A673 (cell line): ENCODE measurements at regions of chr2 and their contacts with region 1.

Region 1: DNA sequence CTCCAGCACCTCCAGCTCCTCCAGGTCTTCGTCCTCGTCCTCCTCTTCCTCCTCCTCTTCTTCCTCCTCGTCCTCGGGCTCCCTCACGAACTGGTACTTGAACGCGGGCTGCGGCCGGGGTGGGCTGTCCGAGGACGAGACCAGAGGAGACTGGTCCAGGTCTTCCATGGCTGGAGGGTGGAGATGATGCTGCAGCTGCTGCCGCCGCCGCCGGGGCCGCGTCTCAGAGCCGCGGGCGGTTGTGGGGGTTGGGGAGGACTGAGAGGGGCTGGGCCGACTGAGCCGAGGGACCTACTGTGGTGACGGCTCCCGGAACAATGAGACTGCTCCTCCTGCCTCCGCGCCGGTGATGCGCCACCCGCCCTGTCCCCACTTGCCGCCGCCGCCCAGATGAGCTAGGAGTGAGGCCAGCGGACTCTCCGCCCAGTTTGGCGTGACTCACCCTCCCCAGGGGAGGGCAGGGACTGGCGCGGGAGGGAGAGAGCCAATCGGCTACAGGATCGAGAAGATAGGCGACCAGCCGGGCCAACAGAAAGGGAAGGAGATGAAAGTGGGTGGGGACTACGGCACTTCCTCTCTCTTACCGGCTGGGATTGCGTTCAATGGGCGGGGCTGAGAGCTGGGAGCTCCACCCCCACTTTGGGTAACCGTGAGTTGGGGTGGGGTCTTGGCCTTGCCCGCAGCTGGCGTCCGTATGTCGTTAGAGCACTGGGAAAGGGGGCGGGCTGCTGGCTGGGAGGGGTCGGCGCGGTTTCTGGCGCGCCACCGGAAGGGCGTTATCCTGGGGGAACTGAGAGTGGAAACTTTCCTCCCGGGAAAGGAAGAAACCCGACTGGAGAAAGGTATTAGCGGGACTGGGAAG is at the start of gene RTN4:
- DNase-seq: peak; percentile 100
- H3K4me3 ChIP-seq: peak within 1 kb of the TSS; percentile 95
- H3K27ac ChIP-seq: peak within 1 kb of the TSS; percentile 93
- H3K4me1 ChIP-seq: peaks cover 35% of the 10 kb centered on the region
- H3K27me3 ChIP-seq: no peaks in the 10 kb centered on the region
- CTCF ChIP-seq: no peak
- total RNA-seq, gene RTN4: 244 and 275 TPM in 2 replicates

Region 2: DNA sequence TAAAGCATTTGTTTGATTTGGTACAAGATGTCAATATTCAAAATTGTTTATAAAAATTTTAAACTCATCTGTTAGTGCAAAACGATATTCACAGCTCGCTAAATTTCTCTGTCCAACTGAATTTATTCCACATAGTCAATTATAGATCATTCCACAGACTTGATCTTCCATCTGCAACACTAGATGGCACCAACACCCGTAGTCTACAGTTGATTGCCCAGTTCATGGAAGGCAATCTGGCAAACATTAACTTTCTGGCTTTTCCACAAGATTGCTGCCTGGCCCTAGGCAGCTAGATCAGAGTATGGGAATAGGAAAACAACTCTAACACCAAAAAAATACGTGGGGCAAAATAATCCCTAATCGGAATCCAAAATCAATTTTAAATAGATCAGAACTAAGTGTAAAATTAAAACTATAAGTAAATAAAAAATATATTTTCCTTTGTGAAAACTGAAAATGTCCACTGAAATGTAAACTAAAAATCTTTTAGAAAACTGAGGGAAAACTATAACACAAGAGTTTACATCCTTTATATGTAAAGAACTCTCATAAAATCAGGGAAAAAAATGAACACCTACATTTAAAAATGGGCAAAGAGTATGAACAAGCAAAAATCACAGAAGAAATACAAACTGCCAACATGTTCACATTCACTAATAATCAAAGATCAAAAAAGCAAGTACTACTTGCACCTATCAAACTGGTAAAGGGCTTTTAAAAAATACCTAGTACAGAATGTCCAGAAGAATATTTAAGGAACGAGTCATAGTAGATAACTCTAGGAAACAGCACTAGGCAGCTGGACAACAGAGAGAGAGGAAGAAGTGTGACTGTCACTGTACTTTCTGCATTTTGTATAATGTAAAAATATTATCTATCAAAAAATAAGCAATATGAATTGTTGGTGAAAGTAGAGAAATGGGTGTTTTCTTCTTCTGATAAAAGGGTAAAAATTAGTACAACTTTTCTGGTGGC is 35.1 kb before region 1 on chr2:
- CTCF ChIA-PET with region 1: interaction called, 4 read pairs
- POLR2A ChIA-PET with region 1: interaction called, 3 read pairs
- intact Hi-C with region 1: loop called (anchors 2 kb)
- DNase-seq: peak; percentile 83
- H3K4me3 ChIP-seq: no peak overlapping the region
- H3K27ac ChIP-seq: no peak overlapping the region
- H3K4me1 ChIP-seq: peaks cover 47% of the 10 kb centered on the region
- H3K27me3 ChIP-seq: no peaks in the 10 kb centered on the region
- CTCF ChIP-seq: peak; percentile 82

Region 3: DNA sequence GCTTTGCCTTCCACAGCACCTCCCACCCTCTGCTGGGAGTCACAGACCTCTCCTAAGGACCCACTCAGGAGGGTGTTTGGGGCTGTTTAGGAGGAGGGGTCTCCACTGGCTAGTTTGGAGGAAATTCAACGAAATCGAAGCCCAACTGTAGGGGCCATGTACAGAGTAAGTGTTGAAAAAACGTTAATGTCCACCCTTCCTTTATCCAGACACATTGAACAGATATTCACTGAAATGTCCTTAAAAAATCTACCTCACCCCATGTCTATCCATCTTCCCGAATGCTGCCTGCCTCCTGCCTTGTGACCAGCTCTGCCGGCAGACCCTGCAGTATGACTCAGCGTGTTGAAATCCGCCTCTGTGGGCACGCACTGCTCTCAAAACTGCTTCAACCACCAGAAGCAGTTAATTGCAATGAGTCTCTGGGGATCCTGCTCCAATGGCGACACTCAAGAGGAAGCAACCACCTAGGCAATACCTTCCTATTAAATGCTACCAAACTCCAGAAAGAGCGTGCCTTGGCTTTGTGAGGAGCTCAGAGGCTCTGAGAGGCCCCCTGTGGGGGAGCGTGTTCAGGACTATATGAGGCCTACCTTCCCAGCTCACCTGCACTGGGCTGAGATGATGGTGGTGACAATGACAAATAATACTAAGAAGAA is 61.3 kb after region 1 on chr2:
- CTCF ChIA-PET with region 1: no interaction called
- POLR2A ChIA-PET with region 1: interaction called, 3 read pairs
- intact Hi-C with region 1: loop called (anchors 5 kb)
- DNase-seq: peak; percentile 95
- H3K4me3 ChIP-seq: no peak overlapping the region
- H3K27ac ChIP-seq: peak overlapping the region; percentile 84
- H3K4me1 ChIP-seq: peaks cover 32% of the 10 kb centered on the region
- H3K27me3 ChIP-seq: no peaks in the 10 kb centered on the region
- CTCF ChIP-seq: no peak

Region 4: DNA sequence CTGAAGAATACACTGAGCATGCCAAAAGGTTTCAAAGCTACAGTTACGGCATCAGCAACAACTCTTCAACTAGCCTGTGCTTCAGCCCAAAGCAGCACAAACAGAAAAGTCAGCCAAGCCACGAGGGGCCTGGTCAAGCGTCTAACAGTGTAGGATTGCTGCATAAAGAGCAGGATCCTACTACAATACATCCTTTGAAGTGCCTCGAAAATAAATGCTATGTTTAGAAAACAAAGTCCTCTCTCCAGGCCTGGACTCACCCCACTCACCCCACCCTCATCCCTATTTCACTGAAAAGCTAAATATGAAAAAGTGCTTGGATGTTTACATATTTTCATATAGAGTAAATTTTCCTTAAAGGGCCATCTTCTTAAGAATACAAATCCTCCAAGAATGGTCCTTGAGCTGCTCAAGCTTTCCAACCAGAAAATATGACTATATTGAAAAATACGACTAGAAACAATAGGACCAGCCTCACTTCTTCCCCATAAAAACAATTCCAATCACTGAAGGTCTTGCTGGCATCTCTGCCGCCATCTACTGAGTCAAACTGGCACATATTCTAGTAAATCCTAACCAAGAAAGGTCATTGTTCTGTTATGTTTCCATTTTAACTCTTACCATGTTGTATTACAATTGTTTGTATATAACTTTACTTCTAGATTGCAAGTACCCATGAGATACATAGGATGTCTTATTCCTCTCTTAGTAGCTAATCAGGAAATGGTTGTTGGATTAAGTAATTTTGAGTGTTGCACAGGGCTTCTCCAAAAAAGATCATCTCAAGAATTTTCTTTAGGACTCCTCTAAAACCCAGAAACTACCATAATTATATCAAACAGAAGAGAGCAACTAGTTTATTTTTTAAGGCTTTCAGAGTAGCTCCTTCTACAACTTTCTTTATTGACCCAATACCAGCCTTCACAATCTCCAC is 118.1 kb after region 1 on chr2:
- CTCF ChIA-PET with region 1: interaction called, 5 read pairs
- POLR2A ChIA-PET with region 1: no interaction called
- intact Hi-C with region 1: loop called (anchors 10 kb)
- DNase-seq: peak; percentile 76
- H3K4me3 ChIP-seq: no peak overlapping the region
- H3K27ac ChIP-seq: peak overlapping the region; percentile 26
- H3K4me1 ChIP-seq: peaks cover 8% of the 10 kb centered on the region
- H3K27me3 ChIP-seq: no peaks in the 10 kb centered on the region
- CTCF ChIP-seq: peak; percentile 80

Region 5: DNA sequence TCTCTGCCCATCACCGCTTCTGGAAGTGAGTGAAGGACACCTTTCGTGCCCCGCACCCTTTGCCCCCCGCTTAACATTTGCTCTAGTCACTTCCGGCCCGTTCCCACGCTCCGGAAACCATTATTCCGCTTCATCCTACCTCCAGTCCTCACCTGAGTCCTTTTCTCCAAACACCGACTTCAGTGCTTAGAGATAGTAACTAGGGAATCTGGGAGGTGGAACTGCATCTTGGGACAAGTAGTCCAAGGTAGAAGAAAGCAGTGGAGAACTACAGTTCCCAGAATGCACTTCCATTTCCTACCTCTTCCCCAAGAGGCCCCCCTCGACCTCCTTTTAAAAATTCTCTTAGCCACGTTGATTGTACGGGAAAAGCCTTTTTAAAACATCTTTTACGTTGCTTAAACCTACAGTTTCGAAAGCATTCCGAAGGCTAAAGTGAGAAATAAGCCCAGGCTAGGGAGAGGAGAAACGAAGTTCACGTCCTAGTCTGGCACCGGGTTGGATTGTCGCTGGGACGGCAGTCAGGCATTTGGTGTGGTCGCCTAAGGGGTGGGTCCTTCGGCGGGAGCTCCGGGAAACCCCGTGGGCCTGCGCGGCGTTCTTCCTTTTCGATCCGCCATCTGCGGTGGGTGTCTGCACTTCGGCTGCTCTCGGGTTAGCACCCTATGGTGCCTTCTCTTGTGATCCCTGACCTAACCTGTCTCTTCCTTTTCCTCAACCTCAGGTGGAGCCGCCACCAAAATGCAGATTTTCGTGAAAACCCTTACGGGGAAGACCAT is 181.9 kb after region 1 on chr2 and contains the starts of genes CLHC1 and RPS27A:
- CTCF ChIA-PET with region 1: no interaction called
- POLR2A ChIA-PET with region 1: interaction called, 4 read pairs
- intact Hi-C with region 1: loop called (anchors 1 kb)
- DNase-seq: peak; percentile 97
- H3K4me3 ChIP-seq: peak within 1 kb of the TSS; percentile 85
- H3K27ac ChIP-seq: peak within 1 kb of the TSS; percentile 98
- H3K4me1 ChIP-seq: peaks cover 22% of the 10 kb centered on the region
- H3K27me3 ChIP-seq: no peaks in the 10 kb centered on the region
- CTCF ChIP-seq: no peak
- total RNA-seq, gene CLHC1: 9.1 and 10.8 TPM in 2 replicates
- total RNA-seq, gene RPS27A: 876 and 928 TPM in 2 replicates